ENCODE measurements at regions of chr5 and their contacts with region 1.

Region 1: GRCh38 chr5:134176511-134177368 is at the start of gene SKP1:
- DNase-seq: peak; percentile 88
- H3K4me3 Mint-ChIP-seq: peak within 1 kb of the TSS; percentile 95
- H3K27ac Mint-ChIP-seq: peak within 1 kb of the TSS; percentile 96
- H3K4me1 Mint-ChIP-seq: peaks cover 33% of the 10 kb centered on the region
- H3K27me3 Mint-ChIP-seq: no peaks in the 10 kb centered on the region
- total RNA-seq, gene SKP1: 284 to 286 TPM

Region 2: DNA sequence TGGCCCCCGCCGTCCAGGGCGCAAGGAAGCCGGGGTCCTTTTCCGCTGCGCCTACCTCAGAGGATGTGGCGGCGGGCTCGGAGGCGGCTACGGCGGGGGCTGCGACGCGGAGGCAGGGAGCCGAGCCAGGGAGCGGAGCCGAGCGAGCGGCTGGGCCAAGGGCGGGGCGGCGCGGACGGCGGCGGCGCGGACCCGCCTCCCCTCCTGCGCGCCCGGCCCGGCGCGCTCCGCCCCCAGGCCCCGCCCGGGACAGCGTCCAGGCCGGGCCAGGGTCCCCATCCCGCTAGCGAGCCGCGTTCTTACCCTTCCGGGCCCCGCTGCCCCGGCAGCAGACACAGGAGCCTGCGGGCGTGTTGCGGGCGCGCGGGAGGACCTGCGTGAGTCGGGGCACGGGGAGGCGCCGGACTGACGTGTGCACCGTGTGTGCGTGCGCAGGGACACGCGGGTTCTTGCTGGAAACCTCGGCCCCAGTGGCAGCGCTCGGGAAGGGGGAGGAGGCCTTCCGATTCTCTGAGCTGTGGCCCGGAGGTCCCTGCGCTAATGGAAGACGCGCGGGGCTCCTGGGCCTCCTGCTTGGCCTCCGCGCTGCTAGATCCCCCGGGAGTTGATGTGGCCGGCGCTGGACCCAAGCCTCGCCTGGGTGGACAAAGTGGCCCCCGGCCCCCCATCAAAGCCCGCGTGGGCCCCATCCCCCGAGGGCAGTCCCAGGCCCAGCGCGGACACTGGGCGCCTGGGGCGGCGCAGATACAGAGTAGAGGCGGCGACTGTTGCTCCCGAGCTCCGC is 172.0 kb before region 1 on chr5 and contains the start of gene VDAC1:
- CTCF ChIA-PET with region 1: no interaction called
- POLR2A ChIA-PET with region 1: interaction called, 12 read pairs
- intact Hi-C with region 1: no loop called
- DNase-seq: peak; percentile 85
- H3K4me3 Mint-ChIP-seq: peak within 1 kb of the TSS; percentile 90
- H3K27ac Mint-ChIP-seq: peak within 1 kb of the TSS; percentile 97
- H3K4me1 Mint-ChIP-seq: peaks cover 37% of the 10 kb centered on the region
- H3K27me3 Mint-ChIP-seq: no peaks in the 10 kb centered on the region
- total RNA-seq, gene VDAC1: 407 to 416 TPM

Region 3: DNA sequence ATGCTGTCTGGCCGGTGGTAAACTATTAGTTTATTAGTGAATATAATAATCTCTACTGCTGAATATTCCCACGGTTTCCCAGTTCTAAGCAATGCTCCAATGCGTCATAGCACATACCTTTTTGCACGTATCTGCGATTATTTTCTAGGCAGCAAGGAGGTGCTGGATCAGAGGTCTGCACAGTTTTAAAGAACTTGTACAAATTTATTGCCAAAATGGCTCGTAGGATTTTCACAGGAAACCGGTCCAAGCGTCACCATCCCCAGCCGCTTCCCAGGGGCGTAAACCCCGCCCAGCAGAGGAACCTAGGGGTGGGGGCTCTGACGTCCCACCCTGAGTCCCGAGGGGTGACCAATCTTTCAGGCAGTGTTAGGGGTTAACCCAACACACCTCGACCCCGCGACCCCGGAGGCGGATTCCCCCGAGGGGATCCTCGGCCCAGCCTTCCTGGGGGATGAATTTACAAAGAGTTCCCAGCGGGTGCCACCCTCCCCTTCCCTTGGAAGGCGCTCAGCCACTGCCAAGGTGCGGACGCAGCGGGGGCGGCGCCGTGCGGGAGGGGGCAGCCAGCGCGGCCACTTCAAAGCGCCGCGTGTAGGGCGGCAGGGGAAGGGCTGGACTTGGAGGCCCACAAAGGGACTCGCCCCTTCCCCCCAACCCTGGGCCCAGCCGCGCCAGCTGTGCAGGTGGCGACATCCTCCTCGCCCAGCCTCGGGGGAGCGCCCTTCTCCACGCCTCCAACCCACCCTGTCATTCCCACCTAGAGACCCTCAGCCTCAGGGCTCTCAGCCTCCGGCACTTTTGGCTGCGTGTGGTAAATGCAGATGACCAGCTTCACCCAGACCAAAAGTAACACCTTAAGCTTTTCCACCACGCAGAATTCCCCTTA is 105.8 kb before region 1 on chr5:
- CTCF ChIA-PET with region 1: no interaction called
- POLR2A ChIA-PET with region 1: no interaction called
- intact Hi-C with region 1: no loop called
- DNase-seq: peak; percentile 58
- H3K4me3 Mint-ChIP-seq: peak overlapping the region; percentile 77
- H3K27ac Mint-ChIP-seq: peak overlapping the region; percentile 92
- H3K4me1 Mint-ChIP-seq: peaks cover 63% of the 10 kb centered on the region
- H3K27me3 Mint-ChIP-seq: no peaks in the 10 kb centered on the region

Region 4: DNA sequence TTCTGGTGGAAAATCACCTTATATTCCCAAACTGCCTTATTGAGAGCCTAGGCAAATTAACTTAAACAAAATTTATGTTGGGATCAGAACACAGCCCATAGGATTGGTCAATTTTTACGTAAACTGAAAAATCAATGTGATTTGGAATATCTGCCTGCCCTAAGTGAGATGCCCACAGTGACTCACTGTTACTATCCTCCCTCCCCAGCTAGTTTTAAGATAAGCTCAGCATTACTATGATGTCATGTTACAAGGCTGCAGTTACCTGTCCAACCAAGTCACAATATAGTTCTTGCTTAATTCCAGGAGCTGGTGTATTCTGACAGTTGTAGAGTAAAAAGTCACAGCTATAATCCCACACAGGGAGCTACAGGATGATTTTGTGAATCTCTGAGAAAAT is 23.1 kb before region 1 on chr5:
- CTCF ChIA-PET with region 1: interaction called, 3 read pairs
- POLR2A ChIA-PET with region 1: interaction called, 10 read pairs
- intact Hi-C with region 1: no loop called
- DNase-seq: no peak
- H3K4me3 Mint-ChIP-seq: no peak overlapping the region
- H3K27ac Mint-ChIP-seq: peak overlapping the region; percentile 52
- H3K4me1 Mint-ChIP-seq: peaks cover 58% of the 10 kb centered on the region
- H3K27me3 Mint-ChIP-seq: no peaks in the 10 kb centered on the region

Region 5: DNA sequence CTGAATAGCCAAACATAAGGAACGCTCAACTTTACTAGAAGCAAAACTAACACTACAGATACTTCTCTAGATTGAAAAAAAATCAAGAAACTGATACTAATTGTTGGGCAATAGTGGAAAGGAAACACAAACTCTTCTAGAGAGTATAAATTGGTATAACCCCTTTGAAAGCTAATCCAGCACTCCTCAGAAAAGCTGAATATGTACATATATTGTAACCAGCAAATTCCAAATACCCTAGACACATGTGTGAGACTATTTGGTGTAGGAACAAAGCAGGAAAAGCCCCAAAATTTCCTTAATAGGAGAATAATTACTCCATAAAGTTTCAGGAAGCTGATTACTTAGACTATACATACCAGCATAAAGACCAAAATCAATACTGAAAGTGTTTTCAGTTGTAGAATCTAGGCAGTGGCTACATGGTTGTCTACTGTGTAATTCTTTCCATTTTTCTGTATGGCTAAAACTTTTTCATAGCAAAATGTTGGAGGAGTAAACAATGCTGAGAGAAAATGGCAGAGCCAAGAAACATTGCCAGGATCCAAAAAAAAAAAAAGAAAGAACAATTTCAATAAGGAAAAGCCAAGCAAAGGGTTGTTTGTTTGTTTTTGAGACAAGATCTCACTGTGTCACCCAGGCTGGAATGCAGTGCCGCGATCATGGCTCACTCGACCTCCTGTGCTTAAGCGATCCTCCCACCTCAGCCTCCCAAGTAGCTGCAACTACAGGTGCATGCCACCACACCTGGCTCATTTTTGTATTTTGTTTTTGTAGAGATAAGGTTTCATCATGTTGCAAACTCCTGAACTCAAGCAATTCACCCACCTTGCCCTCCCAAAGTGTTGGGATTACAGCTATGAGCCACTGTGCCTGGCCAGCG is 15.0 kb before region 1 on chr5:
- CTCF ChIA-PET with region 1: interaction called, 3 read pairs
- POLR2A ChIA-PET with region 1: interaction called, 11 read pairs
- intact Hi-C with region 1: no loop called
- DNase-seq: no peak
- H3K4me3 Mint-ChIP-seq: no peak overlapping the region
- H3K27ac Mint-ChIP-seq: peak overlapping the region; percentile 72
- H3K4me1 Mint-ChIP-seq: peaks cover 35% of the 10 kb centered on the region
- H3K27me3 Mint-ChIP-seq: no peaks in the 10 kb centered on the region

Region 6: GRCh38 chr5:134327327-134327726 is 150.6 kb after region 1 on chr5:
- CTCF ChIA-PET with region 1: no interaction called
- POLR2A ChIA-PET with region 1: no interaction called
- intact Hi-C with region 1: no loop called
- DNase-seq: no peak
- H3K4me3 Mint-ChIP-seq: no peak overlapping the region
- H3K27ac Mint-ChIP-seq: no peak overlapping the region
- H3K4me1 Mint-ChIP-seq: no peaks in the 10 kb centered on the region
- H3K27me3 Mint-ChIP-seq: no peaks in the 10 kb centered on the region

Region 7: GRCh38 chr5:134758504-134759341 is 582.0 kb after region 1 on chr5 and contains the start of gene DDX46:
- CTCF ChIA-PET with region 1: no interaction called
- POLR2A ChIA-PET with region 1: no interaction called
- intact Hi-C with region 1: loop called (anchors 1 kb)
- DNase-seq: peak; percentile 97
- H3K4me3 Mint-ChIP-seq: peak within 1 kb of the TSS; percentile 100
- H3K27ac Mint-ChIP-seq: peak within 1 kb of the TSS; percentile 87
- H3K4me1 Mint-ChIP-seq: peaks cover 34% of the 10 kb centered on the region
- H3K27me3 Mint-ChIP-seq: no peaks in the 10 kb centered on the region
- total RNA-seq, gene DDX46: 67.4 to 68.0 TPM

Region 8: GRCh38 chr5:134975078-134975715 is 798.5 kb after region 1 on chr5:
- CTCF ChIA-PET with region 1: no interaction called
- POLR2A ChIA-PET with region 1: no interaction called
- intact Hi-C with region 1: no loop called
- DNase-seq: no peak
- H3K4me3 Mint-ChIP-seq: no peak overlapping the region
- H3K27ac Mint-ChIP-seq: no peak overlapping the region
- H3K4me1 Mint-ChIP-seq: no peaks in the 10 kb centered on the region
- H3K27me3 Mint-ChIP-seq: no peaks in the 10 kb centered on the region